Activated naive CD4-positive, alpha-beta T cell treated with anti-CD3 and anti-CD28 coated beads for 36 hours (primary cell): ENCODE measurements at regions of chr9 and their contacts with region 1.

Region 1: DNA sequence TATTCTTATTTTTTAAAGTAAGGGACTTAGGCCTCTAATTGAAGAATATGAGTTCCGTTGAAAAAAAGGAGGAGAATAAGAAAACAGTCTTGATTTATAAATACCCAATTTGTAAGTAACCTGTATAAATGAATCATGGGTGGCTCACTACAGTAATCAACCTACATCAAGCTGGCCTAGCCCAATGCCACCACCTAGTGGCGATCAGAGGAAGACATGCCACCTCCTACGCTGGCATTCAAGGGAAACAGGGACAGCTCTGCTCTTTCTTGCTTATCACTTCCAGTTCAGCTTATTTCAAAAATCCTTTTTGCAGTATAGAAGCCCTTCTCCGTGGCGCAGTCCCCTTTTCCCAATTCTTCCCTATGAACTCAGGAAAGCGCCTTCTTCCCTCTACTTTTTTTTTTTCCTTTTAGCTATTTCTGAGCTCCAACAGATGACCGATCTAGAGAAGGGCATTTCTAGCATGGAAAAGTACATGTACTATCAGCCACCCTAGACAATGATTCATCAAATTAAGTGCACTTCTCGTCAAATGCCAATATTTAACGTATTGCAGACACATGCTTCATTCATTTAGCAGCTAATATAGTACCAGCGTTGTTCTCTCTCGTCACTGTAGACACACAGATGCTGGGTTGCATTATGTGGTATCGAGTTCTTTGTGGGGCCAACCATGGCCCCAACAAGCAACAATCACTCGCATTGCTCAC is 28.3 kb downstream of the PTPN3 start:
- DNase-seq: peak; percentile 85
- H3K4me3 Mint-ChIP-seq: no peak overlapping the region
- H3K27ac Mint-ChIP-seq: no peak overlapping the region
- H3K4me1 Mint-ChIP-seq: no peaks in the 10 kb centered on the region
- H3K27me3 Mint-ChIP-seq: peaks cover 5% of the 10 kb centered on the region

Region 2: GRCh38 chr9:108953983-108954574 is 515.7 kb before region 1 on chr9:
- CTCF ChIA-PET with region 1: no interaction called
- intact Hi-C with region 1: loop called (anchors 5 kb)
- DNase-seq: no peak
- H3K4me3 Mint-ChIP-seq: no peak overlapping the region
- H3K27ac Mint-ChIP-seq: no peak overlapping the region
- H3K4me1 Mint-ChIP-seq: peaks cover 2% of the 10 kb centered on the region
- H3K27me3 Mint-ChIP-seq: peaks cover 2% of the 10 kb centered on the region

Region 3: DNA sequence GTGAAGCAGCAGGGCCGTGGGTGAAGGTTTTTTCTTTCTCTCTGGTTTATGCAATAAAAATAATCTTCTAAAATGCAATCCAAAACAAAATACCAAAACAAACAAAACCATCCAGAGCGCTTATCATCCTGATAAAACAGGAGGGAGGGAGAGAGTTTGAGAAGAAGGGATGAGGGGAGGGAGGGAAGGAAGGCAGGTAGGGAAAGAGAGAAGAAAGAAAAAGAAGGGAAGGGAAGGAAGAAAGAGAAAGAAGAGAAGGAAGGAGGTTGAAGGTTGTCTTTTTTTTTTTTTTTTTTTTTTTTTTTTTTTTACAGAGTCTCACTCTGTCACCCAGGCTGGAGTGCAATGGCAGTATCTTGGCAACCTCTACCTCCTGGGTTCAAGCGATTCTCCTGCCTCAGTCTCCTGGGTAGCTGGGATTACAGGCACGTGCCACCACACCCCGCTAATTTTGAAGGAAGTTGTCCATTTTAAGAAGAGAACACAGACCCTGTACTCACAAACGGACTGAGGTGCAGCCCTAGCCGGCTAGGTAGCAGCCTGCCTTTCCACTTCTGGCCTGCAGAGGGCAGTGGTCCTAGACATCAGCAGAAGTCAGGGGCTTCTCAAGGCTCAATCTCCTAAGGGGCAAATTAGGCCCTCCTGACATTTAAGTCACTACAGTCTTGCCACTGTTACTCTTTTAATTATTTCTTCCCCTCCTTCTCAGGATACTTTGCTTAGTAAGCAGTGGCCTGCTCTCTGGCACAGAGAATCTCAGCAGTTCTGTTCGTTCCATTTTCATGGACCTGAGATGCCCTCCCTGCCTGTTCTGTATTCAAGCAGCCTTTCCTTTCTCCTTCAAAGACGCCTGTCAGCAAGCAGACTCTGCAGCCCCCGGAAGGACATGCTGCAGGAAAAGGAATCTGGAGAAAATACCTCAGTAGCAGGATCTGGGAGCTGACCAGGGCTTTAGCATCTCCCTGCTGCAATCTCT is 225.4 kb before region 1 on chr9:
- CTCF ChIA-PET with region 1: interaction called, 5 read pairs
- intact Hi-C with region 1: loop called (anchors 1 kb)
- DNase-seq: peak; percentile 80
- H3K4me3 Mint-ChIP-seq: no peak overlapping the region
- H3K27ac Mint-ChIP-seq: peak overlapping the region; percentile 42
- H3K4me1 Mint-ChIP-seq: no peaks in the 10 kb centered on the region
- H3K27me3 Mint-ChIP-seq: peaks cover 17% of the 10 kb centered on the region

Region 4: DNA sequence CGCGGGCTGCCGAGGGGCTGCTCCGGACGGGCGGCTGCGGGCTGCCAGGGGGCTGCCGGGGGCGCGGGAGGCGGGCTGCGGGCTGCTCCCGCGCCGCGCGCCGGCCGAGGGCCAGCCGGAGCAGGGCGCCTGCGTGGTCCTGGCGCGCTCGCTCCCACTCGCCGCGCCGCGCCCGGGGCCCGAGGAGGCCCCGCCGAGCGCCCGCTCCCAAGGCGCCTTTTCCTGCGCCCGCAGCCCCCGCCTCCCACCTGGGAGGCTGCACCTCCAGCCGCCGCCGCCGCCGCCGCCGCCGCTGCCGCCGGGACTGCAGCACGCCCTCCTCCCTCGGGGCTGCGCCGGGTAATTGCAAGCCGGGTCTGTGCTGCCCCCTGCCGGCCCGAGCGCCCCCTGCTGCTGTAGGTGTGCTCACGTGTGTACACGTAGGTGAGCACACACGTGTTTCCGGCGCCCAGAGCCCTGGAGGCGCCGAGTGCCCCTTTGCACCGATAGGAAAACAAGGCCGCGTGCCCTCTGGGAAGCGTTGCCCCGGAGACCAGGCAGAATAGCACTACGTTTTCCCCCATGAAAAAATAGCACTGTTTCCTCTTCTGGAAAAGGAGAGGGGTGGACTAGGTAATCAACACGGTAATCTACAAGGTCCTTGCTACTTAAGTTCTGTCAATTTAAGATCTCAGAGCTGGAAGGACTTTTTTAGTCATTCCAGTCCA is 148.9 kb before region 1 on chr9 and contains the start of gene EPB41L4B:
- CTCF ChIA-PET with region 1: no interaction called
- intact Hi-C with region 1: loop called (anchors 1 kb)
- DNase-seq: peak; percentile 95
- H3K4me3 Mint-ChIP-seq: peak within 1 kb of the TSS; percentile 69
- H3K27ac Mint-ChIP-seq: no peak within 1 kb of the TSS
- H3K4me1 Mint-ChIP-seq: peaks cover 10% of the 10 kb centered on the region
- H3K27me3 Mint-ChIP-seq: peaks cover 50% of the 10 kb centered on the region
- total RNA-seq, gene EPB41L4B: 0.24 to 0.25 TPM

Region 5: DNA sequence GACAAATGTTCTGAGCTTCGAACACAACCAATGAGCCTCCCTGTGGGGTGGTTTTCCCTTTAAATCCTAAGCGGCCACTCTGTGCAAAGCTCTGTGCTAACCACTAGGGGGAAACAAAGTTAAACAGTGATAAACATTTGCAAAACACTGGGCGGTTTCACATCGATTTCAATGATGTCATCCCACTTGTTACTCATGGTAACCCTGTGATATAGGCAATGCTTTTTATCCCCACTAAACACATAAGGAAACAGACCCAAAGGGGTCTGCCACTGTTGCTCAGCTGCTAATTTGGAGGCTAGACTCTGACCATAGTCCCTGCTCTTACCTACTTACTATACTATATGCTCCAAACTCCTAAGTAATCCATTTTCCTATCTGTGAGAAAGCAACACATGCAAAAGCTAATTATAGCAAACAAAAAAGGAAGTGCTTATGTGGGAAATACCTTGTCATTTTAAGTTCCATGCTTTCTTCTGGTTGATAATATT is 29.0 kb before region 1 on chr9:
- CTCF ChIA-PET with region 1: interaction called, 82 read pairs
- intact Hi-C with region 1: loop called (anchors 1 kb)
- DNase-seq: peak; percentile 79
- H3K4me3 Mint-ChIP-seq: no peak overlapping the region
- H3K27ac Mint-ChIP-seq: no peak overlapping the region
- H3K4me1 Mint-ChIP-seq: peaks cover 16% of the 10 kb centered on the region
- H3K27me3 Mint-ChIP-seq: peaks cover 6% of the 10 kb centered on the region

Region 6: GRCh38 chr9:109448223-109448622 is 21.6 kb before region 1 on chr9:
- CTCF ChIA-PET with region 1: interaction called, 82 read pairs
- intact Hi-C with region 1: no loop called
- DNase-seq: no peak
- H3K4me3 Mint-ChIP-seq: no peak overlapping the region
- H3K27ac Mint-ChIP-seq: no peak overlapping the region
- H3K4me1 Mint-ChIP-seq: peaks cover 15% of the 10 kb centered on the region
- H3K27me3 Mint-ChIP-seq: peaks cover 5% of the 10 kb centered on the region